MCF 10A (cell line): ENCODE measurements at regions of chr14 and their contacts with region 1.

Region 1: DNA sequence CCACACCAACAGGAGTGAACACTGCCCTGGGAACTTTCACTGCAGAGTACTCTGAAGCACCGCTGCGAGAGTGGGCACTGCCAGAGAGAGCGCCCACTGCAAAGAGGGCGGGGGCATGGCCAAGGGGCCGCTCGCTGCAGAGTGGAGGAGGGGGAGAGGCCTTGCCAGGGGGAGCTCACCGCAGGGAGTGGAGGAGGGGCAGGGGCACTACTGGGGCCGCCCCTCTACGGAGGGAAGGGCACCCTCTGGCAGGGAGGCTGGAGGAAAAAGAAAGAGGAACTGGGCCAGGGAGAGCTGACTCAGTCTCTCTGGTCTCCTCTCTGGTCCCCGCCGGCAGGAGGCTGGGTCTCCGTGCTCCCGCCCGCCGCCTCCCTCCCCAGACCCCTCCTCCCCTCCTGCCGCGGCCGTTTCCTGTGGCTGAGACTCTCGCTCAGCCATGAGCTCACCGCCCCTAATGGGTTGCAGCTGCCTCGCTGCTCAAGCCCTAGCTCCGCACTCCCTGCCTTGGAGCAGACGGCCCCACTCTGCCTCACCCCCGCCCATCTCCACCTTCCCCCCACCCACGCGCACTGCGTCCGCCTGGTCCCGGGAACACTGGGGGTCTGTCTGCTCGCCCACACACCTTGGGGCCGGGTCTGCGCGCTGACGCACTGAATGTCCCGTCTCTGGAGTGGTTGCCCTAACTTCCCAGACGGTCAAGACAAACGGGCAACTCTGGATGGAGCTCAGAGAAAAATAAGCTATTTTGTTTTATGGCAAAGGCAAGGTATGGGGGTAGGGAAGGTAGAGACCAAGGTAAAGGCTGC is 1.3 kb downstream of the ARHGEF40 start:
- DNase-seq: peak; percentile 64
- H3K4me3 Mint-ChIP-seq: peak overlapping the region; percentile 83
- H3K27ac Mint-ChIP-seq: peak overlapping the region; percentile 54
- H3K4me1 Mint-ChIP-seq: peaks cover 26% of the 10 kb centered on the region
- H3K27me3 Mint-ChIP-seq: no peaks in the 10 kb centered on the region
- CTCF ChIP-seq: no peak

Region 2: GRCh38 chr14:21049271-21049673 is 22.2 kb before region 1 on chr14:
- CTCF ChIA-PET with region 1: interaction called, 13 read pairs
- POLR2A ChIA-PET with region 1: interaction called, 3 read pairs
- intact Hi-C with region 1: no loop called
- DNase-seq: no peak
- H3K4me3 Mint-ChIP-seq: no peak overlapping the region
- H3K27ac Mint-ChIP-seq: no peak overlapping the region
- H3K4me1 Mint-ChIP-seq: peaks cover 8% of the 10 kb centered on the region
- H3K27me3 Mint-ChIP-seq: no peaks in the 10 kb centered on the region
- CTCF ChIP-seq: no peak

Region 3: GRCh38 chr14:21092273-21093011 is 21.0 kb after region 1 on chr14:
- CTCF ChIA-PET with region 1: interaction called, 77 read pairs
- POLR2A ChIA-PET with region 1: interaction called, 9 read pairs
- intact Hi-C with region 1: loop called (anchors 1 kb)
- DNase-seq: peak; percentile 64
- H3K4me3 Mint-ChIP-seq: peak overlapping the region; percentile 19
- H3K27ac Mint-ChIP-seq: no peak overlapping the region
- H3K4me1 Mint-ChIP-seq: peaks cover 24% of the 10 kb centered on the region
- H3K27me3 Mint-ChIP-seq: no peaks in the 10 kb centered on the region
- CTCF ChIP-seq: peak; percentile 100

Region 4: DNA sequence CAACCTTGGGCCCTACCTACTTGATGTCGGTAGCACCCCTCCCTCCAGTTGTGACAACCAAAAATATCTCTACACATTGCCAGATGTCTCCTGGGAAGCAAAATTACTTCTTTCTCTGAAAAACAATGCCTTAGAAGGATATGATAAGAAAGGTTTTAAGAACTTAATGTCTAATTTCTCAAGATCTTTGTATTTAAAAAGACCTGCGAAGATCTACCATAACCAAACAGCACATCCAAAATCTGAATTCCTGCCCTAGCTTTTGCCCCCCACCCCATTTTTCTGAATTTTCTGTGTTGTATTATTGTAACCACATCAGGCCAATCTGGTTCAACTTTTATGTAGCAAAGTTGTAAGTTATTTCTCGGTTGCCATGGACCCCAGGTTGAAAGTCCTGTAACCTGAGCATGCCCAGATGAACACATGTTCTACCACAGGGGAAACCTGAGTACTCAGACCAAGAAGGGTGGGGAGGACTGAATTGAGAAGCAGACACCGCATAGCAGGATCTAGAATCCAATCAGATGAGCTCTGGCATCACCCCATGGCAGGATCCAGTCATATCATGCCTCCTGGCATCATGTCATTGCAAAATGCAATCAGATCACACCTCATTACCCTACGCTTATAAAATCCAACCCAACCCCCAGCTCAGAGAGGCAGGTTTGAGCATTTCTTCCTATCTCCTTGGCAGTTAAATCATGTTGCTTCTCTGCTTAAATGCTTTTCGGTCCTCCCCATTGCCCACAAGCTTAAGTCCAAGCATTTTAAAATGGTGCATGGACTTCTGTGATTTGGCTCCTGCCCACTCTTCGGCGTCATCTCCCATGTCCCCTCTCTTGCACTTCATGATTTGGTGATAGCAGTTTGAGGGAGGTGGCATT is 38.2 kb after region 1 on chr14:
- CTCF ChIA-PET with region 1: interaction called, 127 read pairs
- POLR2A ChIA-PET with region 1: interaction called, 38 read pairs
- intact Hi-C with region 1: loop called (anchors 1 kb)
- DNase-seq: peak; percentile 41
- H3K4me3 Mint-ChIP-seq: no peak overlapping the region
- H3K27ac Mint-ChIP-seq: no peak overlapping the region
- H3K4me1 Mint-ChIP-seq: peaks cover 27% of the 10 kb centered on the region
- H3K27me3 Mint-ChIP-seq: no peaks in the 10 kb centered on the region
- CTCF ChIP-seq: no peak

Region 5: GRCh38 chr14:21557084-21557901 is 485.9 kb after region 1 on chr14:
- CTCF ChIA-PET with region 1: no interaction called
- POLR2A ChIA-PET with region 1: interaction called, 3 read pairs
- intact Hi-C with region 1: loop called (anchors 5 kb)
- DNase-seq: peak; percentile 84
- H3K4me3 Mint-ChIP-seq: peak overlapping the region; percentile 45
- H3K27ac Mint-ChIP-seq: no peak overlapping the region
- H3K4me1 Mint-ChIP-seq: peaks cover 7% of the 10 kb centered on the region
- H3K27me3 Mint-ChIP-seq: no peaks in the 10 kb centered on the region
- CTCF ChIP-seq: peak; percentile 70